ENCODE measurements at regions of chr4 and their contacts with region 1.

Region 1: GRCh38 chr4:185265942-185266341 is 56.5 kb downstream of the SNX25 start:
- DNase-seq: no peak
- H3K4me3 ChIP-seq: no peak overlapping the region
- H3K27ac ChIP-seq: no peak overlapping the region
- H3K4me1 ChIP-seq: peaks cover 20% of the 10 kb centered on the region
- H3K27me3 ChIP-seq: no peaks in the 10 kb centered on the region
- CTCF ChIP-seq: no peak

Region 2: DNA sequence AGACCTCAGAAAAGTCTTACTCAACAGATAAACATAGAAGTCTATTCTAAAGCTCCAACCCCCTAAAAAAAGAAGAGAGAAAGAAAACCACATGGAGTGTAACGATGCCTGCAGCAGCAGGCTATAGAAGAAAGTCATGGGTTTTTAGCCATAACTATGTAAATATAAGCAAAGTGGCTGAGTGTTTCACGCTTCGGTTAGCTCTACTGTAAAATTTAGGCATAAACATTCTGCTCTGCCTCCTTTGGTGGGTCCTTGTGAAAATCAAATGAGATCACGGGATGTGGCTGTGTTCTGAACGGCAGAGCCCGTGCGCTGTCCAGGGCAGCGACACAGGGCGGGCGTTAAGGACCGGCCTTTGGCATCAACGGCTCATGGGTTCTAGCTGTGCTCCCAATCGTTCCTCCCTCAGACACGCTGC is 870.0 kb before region 1 on chr4:
- CTCF ChIA-PET with region 1: no interaction called
- POLR2A ChIA-PET with region 1: no interaction called
- intact Hi-C with region 1: no loop called
- DNase-seq: no peak
- H3K4me3 ChIP-seq: no peak overlapping the region
- H3K27ac ChIP-seq: no peak overlapping the region
- H3K4me1 ChIP-seq: peaks cover 14% of the 10 kb centered on the region
- H3K27me3 ChIP-seq: no peaks in the 10 kb centered on the region
- CTCF ChIP-seq: no peak

Region 3: DNA sequence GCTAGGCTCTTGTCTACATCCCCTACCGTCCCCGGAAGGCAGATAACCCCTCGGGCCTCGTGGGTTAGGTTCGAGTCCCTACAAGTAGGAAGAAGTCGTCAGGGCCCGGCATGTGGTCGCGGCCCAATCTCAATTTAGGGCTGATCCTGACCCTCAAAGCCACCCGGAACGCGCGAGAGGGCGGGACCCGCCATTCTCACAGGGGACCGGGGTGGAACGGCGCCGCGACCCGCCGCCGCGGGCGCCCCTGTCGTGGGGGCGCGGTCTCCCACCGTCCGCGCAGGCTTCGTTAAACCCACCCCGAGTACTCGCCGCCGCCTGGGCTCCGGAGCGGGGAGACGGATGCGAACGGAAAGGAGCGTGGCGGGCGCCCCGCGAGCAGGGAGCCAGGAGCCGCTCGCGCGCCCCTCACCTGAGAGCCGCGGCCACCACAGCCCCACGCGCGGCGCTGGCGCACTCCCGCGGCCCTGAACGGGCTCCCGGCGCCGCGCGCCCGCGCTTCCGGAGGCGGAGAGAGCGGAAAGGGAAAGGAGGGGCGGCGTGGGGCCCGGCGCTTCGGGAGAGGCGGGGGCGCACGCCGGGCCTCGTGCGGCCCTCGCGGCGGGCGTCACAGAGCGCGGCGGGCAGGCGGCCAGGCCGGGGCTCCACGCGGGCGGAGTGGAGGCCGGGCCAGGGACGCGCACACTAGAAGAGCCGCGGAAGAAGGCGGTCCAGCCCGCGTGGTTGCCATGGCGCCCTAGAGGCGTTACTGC is 62.3 kb before region 1 on chr4 and contains the start of gene CFAP97:
- CTCF ChIA-PET with region 1: no interaction called
- POLR2A ChIA-PET with region 1: no interaction called
- intact Hi-C with region 1: loop called (anchors 5 kb)
- DNase-seq: peak; percentile 49 to 78
- H3K4me3 ChIP-seq: peak within 1 kb of the TSS; percentile 75
- H3K27ac ChIP-seq: peak within 1 kb of the TSS; percentile 76
- H3K4me1 ChIP-seq: peaks cover 35% of the 10 kb centered on the region
- H3K27me3 ChIP-seq: no peaks in the 10 kb centered on the region
- CTCF ChIP-seq: no peak
- total RNA-seq, gene CFAP97: 33.4 and 48.2 TPM in 2 replicates

Measured in PC-9 (cell line).